Activated CD4-positive, alpha-beta T cell treated with anti-CD3 and anti-CD28 coated beads, Interleukin-2, amount 10 ng/mL, durations not matched to agents 7 days and 5 days (primary cell): ENCODE measurements at regions of chr10 and their contacts with region 1.

Region 1: DNA sequence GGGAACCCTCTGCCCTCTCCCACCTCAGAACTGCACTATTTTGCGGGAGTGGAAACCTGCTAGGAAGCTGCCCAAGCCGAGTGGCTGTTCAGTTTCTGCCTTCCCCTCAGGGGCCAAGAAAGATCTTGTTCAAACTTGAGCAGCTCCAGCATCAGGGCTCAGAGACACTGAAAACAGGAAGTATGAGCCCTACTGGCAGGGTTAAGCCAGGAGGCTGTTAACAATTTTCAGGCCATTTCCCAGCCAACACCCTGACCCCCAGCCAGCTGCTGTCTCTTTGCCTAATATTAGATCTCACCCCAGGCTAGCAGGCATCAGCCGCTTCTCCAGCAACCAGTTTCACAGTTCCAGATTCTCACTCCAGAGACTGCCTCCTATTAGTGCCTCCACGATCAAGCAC is 9.2 kb downstream of the PLAU start:
- DNase-seq: peak; percentile 12
- H3K4me3 Mint-ChIP-seq: no peak overlapping the region
- H3K27ac Mint-ChIP-seq: peak overlapping the region; percentile 76
- H3K4me1 Mint-ChIP-seq: peaks cover 31% of the 10 kb centered on the region
- H3K27me3 Mint-ChIP-seq: peaks cover 31% of the 10 kb centered on the region

Region 2: DNA sequence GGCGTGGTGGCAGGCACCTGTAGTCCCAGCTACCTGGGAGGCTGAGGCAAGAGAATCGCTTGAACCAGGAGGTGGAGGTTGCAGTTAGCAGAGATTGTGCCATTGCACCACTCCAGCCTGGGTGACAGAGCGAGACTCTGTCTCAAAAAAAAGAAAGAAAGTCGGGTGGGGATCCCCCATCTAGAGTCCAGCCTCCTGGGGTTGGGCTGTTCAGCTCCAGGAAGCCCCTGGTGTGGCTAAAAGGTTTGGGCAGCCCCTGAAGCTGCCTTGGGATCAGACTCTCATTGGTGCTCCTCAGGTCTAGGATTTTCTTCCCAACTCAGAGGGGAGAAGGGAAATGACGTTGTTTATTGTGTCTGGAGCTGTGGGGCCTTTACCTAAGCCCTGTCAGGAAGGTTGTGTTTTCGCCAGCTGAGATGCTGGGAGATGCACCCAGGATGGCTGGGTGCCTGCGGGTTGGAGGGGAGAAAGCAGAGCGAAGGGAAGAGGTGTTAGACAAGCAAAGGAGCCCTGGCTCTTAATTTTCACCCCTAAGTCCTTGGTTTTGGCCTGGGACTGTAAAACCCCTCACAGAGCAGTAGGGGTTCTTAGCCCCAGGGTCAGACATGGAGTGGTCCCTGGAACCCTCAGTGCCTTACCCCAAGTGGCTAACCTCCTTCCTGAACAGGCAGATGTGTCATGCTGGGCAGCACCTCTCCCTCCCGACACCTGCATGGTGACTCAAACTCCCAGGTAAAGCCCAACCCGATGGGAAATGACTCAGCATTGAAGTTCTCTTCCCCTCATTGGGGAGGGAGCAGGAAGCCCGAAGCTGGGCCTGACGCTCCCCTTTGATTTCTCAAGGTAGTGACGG is 11.9 kb after region 1 on chr10:
- CTCF ChIA-PET with region 1: interaction called, 17 read pairs
- POLR2A ChIA-PET with region 1: no interaction called
- DNase-seq: peak; percentile 64
- H3K4me3 Mint-ChIP-seq: peak overlapping the region; percentile 7
- H3K27ac Mint-ChIP-seq: peak overlapping the region; percentile 80
- H3K4me1 Mint-ChIP-seq: peaks cover 16% of the 10 kb centered on the region
- H3K27me3 Mint-ChIP-seq: peaks cover 18% of the 10 kb centered on the region